A673 (cell line): ENCODE measurements at regions of chr1 and their contacts with region 1.

Region 1: DNA sequence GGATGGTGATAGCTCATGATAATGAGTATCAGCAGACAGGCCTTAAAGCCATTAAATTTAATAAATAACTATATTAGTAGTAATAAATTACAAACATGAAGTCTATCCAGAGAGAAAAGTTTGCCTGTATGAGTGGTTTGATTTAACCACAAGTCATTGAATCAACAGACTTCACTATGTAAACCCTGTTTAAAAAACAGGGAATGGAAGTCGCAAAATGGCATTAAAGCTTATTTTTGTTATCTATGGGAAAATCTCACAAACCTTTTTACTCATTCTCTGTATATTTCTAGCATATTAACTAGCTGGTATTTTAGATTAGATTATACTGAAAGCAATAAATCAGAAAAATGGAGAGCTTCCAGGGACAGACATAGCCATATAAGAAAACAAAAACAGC is 45.3 kb downstream of the SASS6 start:
- DNase-seq: no peak
- H3K4me3 ChIP-seq: no peak overlapping the region
- H3K27ac ChIP-seq: no peak overlapping the region
- H3K4me1 ChIP-seq: no peaks in the 10 kb centered on the region
- H3K27me3 ChIP-seq: no peaks in the 10 kb centered on the region
- CTCF ChIP-seq: no peak

Region 2: DNA sequence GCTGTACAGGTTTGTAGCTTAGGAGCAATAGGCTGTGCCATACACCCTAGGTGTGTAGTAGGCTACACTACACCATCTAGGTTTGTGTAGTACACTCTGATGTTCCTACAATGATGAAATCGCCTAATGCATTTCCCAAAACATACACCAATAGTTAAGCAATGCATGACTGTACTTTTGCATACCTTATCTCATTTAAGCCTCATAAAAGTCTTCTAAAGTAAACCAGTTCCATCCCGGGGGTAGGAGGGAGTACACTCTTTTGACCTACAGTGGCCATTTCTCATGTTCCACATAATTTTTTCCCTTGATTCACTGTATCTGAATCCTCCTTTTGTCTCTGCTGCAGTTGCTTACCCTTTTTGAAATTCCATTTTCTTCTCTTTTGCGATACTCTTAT is 57.7 kb after region 1 on chr1:
- CTCF ChIA-PET with region 1: no interaction called
- POLR2A ChIA-PET with region 1: no interaction called
- intact Hi-C with region 1: no loop called
- DNase-seq: no peak
- H3K4me3 ChIP-seq: no peak overlapping the region
- H3K27ac ChIP-seq: no peak overlapping the region
- H3K4me1 ChIP-seq: no peaks in the 10 kb centered on the region
- H3K27me3 ChIP-seq: no peaks in the 10 kb centered on the region
- CTCF ChIP-seq: no peak

Region 3: GRCh38 chr1:100164216-100164615 is 76.8 kb after region 1 on chr1:
- CTCF ChIA-PET with region 1: no interaction called
- POLR2A ChIA-PET with region 1: no interaction called
- intact Hi-C with region 1: no loop called
- DNase-seq: peak; percentile 81
- H3K4me3 ChIP-seq: no peak overlapping the region
- H3K27ac ChIP-seq: no peak overlapping the region
- H3K4me1 ChIP-seq: no peaks in the 10 kb centered on the region
- H3K27me3 ChIP-seq: no peaks in the 10 kb centered on the region
- CTCF ChIP-seq: no peak

Region 4: DNA sequence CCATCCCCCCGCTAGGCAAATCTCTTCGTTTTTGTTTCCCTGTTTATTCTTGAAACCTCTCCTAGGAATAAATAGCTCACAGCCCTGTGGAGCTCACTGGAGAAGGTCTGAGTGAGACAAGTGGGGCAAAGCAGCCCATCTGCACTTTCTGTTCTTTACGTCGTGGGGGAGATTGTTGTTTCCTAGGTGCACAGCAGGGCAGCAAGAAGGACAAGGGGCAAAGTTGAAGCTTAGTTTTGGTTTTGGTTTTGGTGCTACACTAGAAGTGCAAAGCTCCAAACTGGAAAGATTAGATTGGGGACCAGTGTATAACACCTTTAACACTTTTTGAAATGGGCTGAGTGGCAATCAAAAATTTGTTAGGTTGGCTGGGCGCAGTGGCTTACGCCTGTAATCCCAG is 527.2 kb after region 1 on chr1:
- CTCF ChIA-PET with region 1: no interaction called
- POLR2A ChIA-PET with region 1: interaction called, 10 read pairs
- intact Hi-C with region 1: no loop called
- DNase-seq: no peak
- H3K4me3 ChIP-seq: no peak overlapping the region
- H3K27ac ChIP-seq: no peak overlapping the region
- H3K4me1 ChIP-seq: no peaks in the 10 kb centered on the region
- H3K27me3 ChIP-seq: peaks cover 16% of the 10 kb centered on the region
- CTCF ChIP-seq: no peak